ENCODE measurements at regions of chr1 and their contacts with region 1.

Region 1: DNA sequence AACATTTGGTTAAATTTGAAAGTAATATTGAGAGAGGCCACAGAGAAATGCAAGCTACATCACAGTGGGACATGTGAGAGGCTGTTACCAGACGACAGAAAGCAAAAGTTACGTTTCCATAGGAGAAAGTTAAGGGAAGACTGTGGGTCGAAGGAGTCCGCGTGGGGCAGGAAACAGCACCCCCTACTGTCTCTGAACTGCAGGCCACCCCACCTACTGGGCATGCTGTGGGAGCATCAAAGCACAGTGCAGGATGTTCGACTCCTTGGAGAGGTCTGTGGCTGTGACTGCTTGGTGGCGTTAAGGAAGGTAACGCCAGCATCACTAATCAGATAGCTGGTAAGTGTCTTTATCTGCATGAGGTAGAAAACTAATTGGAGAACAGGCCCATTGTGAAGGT is 123.9 kb downstream of the PTBP2 start:
- DNase-seq: peak in 2 of 9 donors; percentile 8 to 43
- ATAC-seq: peak; percentile 65
- H3K4me3 ChIP-seq: no peak overlapping the region
- H3K4me3 Mint-ChIP-seq: no peak overlapping the region
- H3K27ac ChIP-seq: no peak overlapping the region
- H3K27ac Mint-ChIP-seq: no peak overlapping the region
- H3K4me1 ChIP-seq: no peaks in the 10 kb centered on the region
- H3K4me1 Mint-ChIP-seq: peaks cover 0 to 5% (median 0%) of the 10 kb centered on the region in 7 donors
- H3K27me3 ChIP-seq: no peaks in the 10 kb centered on the region
- H3K27me3 Mint-ChIP-seq: peaks cover 0 to 3% (median 0%) of the 10 kb centered on the region in 5 donors

Region 2: DNA sequence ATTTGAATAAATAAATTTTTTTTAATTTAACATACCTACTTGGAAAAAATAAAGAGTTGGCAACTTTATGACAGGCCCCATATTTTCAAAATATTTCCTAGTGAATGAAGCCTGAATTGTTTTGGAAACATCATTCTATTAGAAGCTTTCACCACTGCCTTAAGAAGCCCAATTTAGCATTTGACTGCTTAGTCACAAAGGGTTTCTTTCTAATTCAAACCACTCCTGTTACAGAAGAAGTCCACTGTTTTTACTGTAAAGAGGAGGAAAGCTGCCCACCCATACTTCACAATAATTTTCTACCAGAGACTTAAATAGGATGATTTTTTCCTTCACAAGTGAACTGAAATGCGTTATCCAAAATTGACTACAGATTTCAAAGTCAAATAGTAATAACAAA is 658.4 kb before region 1 on chr1:
- CTCF ChIA-PET with region 1: no interaction called
- POLR2A ChIA-PET with region 1: no interaction called
- intact Hi-C with region 1: no loop called
- DNase-seq: no peak
- ATAC-seq: no peak
- H3K4me3 ChIP-seq: no peak overlapping the region
- H3K4me3 Mint-ChIP-seq: no peak overlapping the region
- H3K27ac ChIP-seq: no peak overlapping the region
- H3K27ac Mint-ChIP-seq: no peak overlapping the region
- H3K4me1 ChIP-seq: no peaks in the 10 kb centered on the region
- H3K4me1 Mint-ChIP-seq: no peaks in the 10 kb centered on the region
- H3K27me3 ChIP-seq: no peaks in the 10 kb centered on the region
- H3K27me3 Mint-ChIP-seq: no peaks in the 10 kb centered on the region

Region 3: GRCh38 chr1:96236156-96236739 is 609.2 kb before region 1 on chr1:
- CTCF ChIA-PET with region 1: no interaction called
- POLR2A ChIA-PET with region 1: no interaction called
- intact Hi-C with region 1: loop called in 1 of 2 experiments (anchors 5 kb)
- DNase-seq: no peak
- ATAC-seq: no peak
- H3K4me3 ChIP-seq: no peak overlapping the region
- H3K4me3 Mint-ChIP-seq: no peak overlapping the region
- H3K27ac ChIP-seq: no peak overlapping the region
- H3K27ac Mint-ChIP-seq: no peak overlapping the region
- H3K4me1 ChIP-seq: no peaks in the 10 kb centered on the region
- H3K4me1 Mint-ChIP-seq: no peaks in the 10 kb centered on the region
- H3K27me3 ChIP-seq: no peaks in the 10 kb centered on the region
- H3K27me3 Mint-ChIP-seq: no peaks in the 10 kb centered on the region

Region 4: GRCh38 chr1:96362623-96363022 is 482.8 kb before region 1 on chr1:
- CTCF ChIA-PET with region 1: no interaction called
- POLR2A ChIA-PET with region 1: no interaction called
- intact Hi-C with region 1: no loop called
- DNase-seq: no peak
- ATAC-seq: peak; percentile 72
- H3K4me3 ChIP-seq: no peak overlapping the region
- H3K4me3 Mint-ChIP-seq: no peak overlapping the region
- H3K27ac ChIP-seq: no peak overlapping the region
- H3K27ac Mint-ChIP-seq: peak overlapping the region in 1 of 9 donors; percentile 13
- H3K4me1 ChIP-seq: no peaks in the 10 kb centered on the region
- H3K4me1 Mint-ChIP-seq: peaks cover 0 to 11% (median 0%) of the 10 kb centered on the region in 7 donors
- H3K27me3 ChIP-seq: no peaks in the 10 kb centered on the region
- H3K27me3 Mint-ChIP-seq: no peaks in the 10 kb centered on the region

Region 5: GRCh38 chr1:96596226-96596922 is 249.1 kb before region 1 on chr1:
- CTCF ChIA-PET with region 1: no interaction called
- POLR2A ChIA-PET with region 1: no interaction called
- intact Hi-C with region 1: loop called in 1 of 2 experiments (anchors 1 kb)
- DNase-seq: peak in 2 of 9 donors; percentile 3 to 24
- ATAC-seq: no peak
- H3K4me3 ChIP-seq: no peak overlapping the region
- H3K4me3 Mint-ChIP-seq: no peak overlapping the region
- H3K27ac ChIP-seq: no peak overlapping the region
- H3K27ac Mint-ChIP-seq: no peak overlapping the region
- H3K4me1 ChIP-seq: no peaks in the 10 kb centered on the region
- H3K4me1 Mint-ChIP-seq: no peaks in the 10 kb centered on the region
- H3K27me3 ChIP-seq: no peaks in the 10 kb centered on the region
- H3K27me3 Mint-ChIP-seq: peaks cover 0 to 19% (median 10%) of the 10 kb centered on the region in 5 donors

Region 6: DNA sequence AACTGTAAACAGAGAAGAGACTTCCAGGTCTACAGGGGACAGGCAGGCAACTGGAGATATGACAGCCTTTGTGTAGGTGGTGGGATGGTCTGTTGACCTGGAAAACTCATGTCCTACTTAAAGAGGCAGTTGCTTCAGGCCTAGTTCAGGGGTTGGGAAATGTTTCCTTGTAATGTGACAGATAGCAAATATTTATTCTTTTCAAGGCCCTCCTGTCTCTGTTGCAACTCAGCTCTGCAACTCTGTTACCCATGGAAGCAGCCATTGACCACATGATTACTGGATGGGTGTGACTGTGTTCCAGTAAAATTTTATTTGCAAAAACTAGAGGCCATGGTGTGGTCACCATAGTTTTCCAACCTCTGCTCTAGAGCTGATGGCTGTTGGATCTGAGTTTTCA is 218.1 kb after region 1 on chr1:
- CTCF ChIA-PET with region 1: no interaction called
- POLR2A ChIA-PET with region 1: no interaction called
- intact Hi-C with region 1: no loop called
- DNase-seq: no peak
- ATAC-seq: no peak
- H3K4me3 ChIP-seq: no peak overlapping the region
- H3K4me3 Mint-ChIP-seq: no peak overlapping the region
- H3K27ac ChIP-seq: no peak overlapping the region
- H3K27ac Mint-ChIP-seq: no peak overlapping the region
- H3K4me1 ChIP-seq: no peaks in the 10 kb centered on the region
- H3K4me1 Mint-ChIP-seq: no peaks in the 10 kb centered on the region
- H3K27me3 ChIP-seq: no peaks in the 10 kb centered on the region
- H3K27me3 Mint-ChIP-seq: peaks cover 0 to 4% (median 0%) of the 10 kb centered on the region in 5 donors

Measured in naive thymus-derived CD4-positive, alpha-beta T cell (primary cell).